Naive thymus-derived CD8-positive, alpha-beta T cell (primary cell): ENCODE measurements at regions of chr17 and their contacts with region 1.

Region 1: GRCh38 chr17:35088881-35089585 is 25.5 kb upstream of the RFFL start:
- DNase-seq: peak; percentile 82 to 96 (median 90)
- ATAC-seq: peak; percentile 79 to 84
- H3K4me3 Mint-ChIP-seq: peak overlapping the region; percentile 90 to 98 (median 94)
- H3K27ac Mint-ChIP-seq: peak overlapping the region; percentile 95 to 98 (median 96)
- H3K4me1 Mint-ChIP-seq: peaks cover 10 to 53% (median 40%) of the 10 kb centered on the region in 4 donors
- H3K27me3 Mint-ChIP-seq: no peaks in the 10 kb centered on the region

Region 2: GRCh38 chr17:34980681-34981537 is 108.1 kb before region 1 on chr17:
- POLR2A ChIA-PET with region 1: interaction called, 34 read pairs
- DNase-seq: peak in 9 of 10 donors; percentile 65 to 86 (median 73)
- ATAC-seq: peak; percentile 82 to 84
- H3K4me3 Mint-ChIP-seq: peak overlapping the region; percentile 86 to 97 (median 92)
- H3K27ac Mint-ChIP-seq: peak overlapping the region; percentile 92 to 99 (median 98)
- H3K4me1 Mint-ChIP-seq: peaks cover 30 to 53% (median 53%) of the 10 kb centered on the region in 4 donors
- H3K27me3 Mint-ChIP-seq: no peaks in the 10 kb centered on the region

Region 3: GRCh38 chr17:34998205-34998604 is 90.8 kb before region 1 on chr17:
- POLR2A ChIA-PET with region 1: interaction called, 18 read pairs
- DNase-seq: peak; percentile 61 to 87 (median 72)
- ATAC-seq: peak; percentile 91 to 97
- H3K4me3 Mint-ChIP-seq: no peak overlapping the region
- H3K27ac Mint-ChIP-seq: peak overlapping the region; percentile 33 to 90 (median 83)
- H3K4me1 Mint-ChIP-seq: peaks cover 0 to 6% (median 5%) of the 10 kb centered on the region in 4 donors
- H3K27me3 Mint-ChIP-seq: no peaks in the 10 kb centered on the region

Region 4: DNA sequence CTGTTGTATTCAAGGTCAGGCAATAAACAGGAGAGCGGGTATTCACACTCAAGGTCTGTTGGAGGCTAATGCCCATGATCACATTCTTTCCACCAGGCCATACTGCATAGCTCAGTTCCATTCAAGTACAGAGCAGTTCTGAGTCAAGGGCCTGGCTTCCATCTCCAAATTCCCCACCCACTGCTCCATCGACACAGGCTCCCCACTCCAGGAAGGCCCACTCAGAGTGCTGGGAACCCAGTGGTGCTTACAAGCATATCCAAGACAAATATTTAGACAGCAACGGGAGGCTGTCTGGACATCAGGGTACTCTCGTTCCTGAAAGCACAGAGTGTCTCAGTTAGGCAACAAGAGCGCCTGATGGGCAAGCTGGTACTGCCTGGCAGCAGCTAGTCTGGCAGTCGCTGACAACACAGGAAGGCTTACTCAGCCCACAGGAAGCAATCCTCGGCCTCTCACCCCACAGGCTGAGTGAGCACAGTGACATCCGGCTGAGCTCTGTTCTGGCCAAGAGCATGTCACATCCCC is 66.4 kb before region 1 on chr17:
- POLR2A ChIA-PET with region 1: interaction called, 23 read pairs
- DNase-seq: peak; percentile 23 to 77 (median 50)
- ATAC-seq: peak; percentile 98 to 100
- H3K4me3 Mint-ChIP-seq: peak overlapping the region; percentile 36 to 79 (median 68)
- H3K27ac Mint-ChIP-seq: peak overlapping the region; percentile 94 to 99 (median 96)
- H3K4me1 Mint-ChIP-seq: peaks cover 15 to 60% (median 50%) of the 10 kb centered on the region in 4 donors
- H3K27me3 Mint-ChIP-seq: no peaks in the 10 kb centered on the region

Region 5: DNA sequence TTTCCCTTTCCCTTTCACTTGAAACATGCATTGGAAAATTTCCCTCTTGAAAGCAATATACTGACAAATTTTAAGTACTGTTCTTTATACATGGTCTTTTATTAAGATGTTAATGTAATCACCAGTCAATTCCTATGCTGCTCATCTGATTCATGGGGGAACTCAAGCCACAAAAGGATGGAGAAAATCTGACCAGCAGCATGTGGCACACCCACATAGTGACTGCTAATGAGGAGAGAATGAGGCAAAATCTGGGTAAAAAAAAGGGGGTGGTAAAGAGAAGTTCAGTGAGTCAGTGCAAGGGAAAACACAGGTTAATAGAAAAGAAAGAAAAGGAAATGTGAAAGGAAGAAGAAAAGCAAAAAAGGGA is 36.8 kb before region 1 on chr17:
- POLR2A ChIA-PET with region 1: interaction called, 17 read pairs
- DNase-seq: no peak
- ATAC-seq: no peak
- H3K4me3 Mint-ChIP-seq: peak overlapping the region; percentile 42 to 86 (median 74)
- H3K27ac Mint-ChIP-seq: peak overlapping the region; percentile 92 to 99 (median 94)
- H3K4me1 Mint-ChIP-seq: peaks cover 41 to 85% (median 75%) of the 10 kb centered on the region in 4 donors
- H3K27me3 Mint-ChIP-seq: no peaks in the 10 kb centered on the region

Region 6: GRCh38 chr17:35119368-35120165 is 30.5 kb after region 1 on chr17 and contains the start of gene RAD51D:
- POLR2A ChIA-PET with region 1: interaction called, 15 read pairs
- DNase-seq: peak; percentile 67 to 87 (median 84)
- ATAC-seq: peak; percentile 91
- H3K4me3 Mint-ChIP-seq: peak within 1 kb of the TSS; percentile 84 to 98 (median 96)
- H3K27ac Mint-ChIP-seq: peak within 1 kb of the TSS; percentile 87 to 98 (median 96)
- H3K4me1 Mint-ChIP-seq: peaks cover 15 to 54% (median 39%) of the 10 kb centered on the region in 4 donors
- H3K27me3 Mint-ChIP-seq: no peaks in the 10 kb centered on the region
- polyA plus RNA-seq, gene RAD51D: 6.5 to 13.6 (median 8.4) TPM

Region 7: GRCh38 chr17:35135322-35135721 is 46.3 kb after region 1 on chr17:
- POLR2A ChIA-PET with region 1: no interaction called
- DNase-seq: no peak
- ATAC-seq: no peak
- H3K4me3 Mint-ChIP-seq: no peak overlapping the region
- H3K27ac Mint-ChIP-seq: peak overlapping the region in 2 of 10 donors; percentile 27 to 57
- H3K4me1 Mint-ChIP-seq: peaks cover 0 to 7% (median 2%) of the 10 kb centered on the region in 4 donors
- H3K27me3 Mint-ChIP-seq: no peaks in the 10 kb centered on the region